SK-N-SH (cell line): ENCODE measurements at regions of chr5 and their contacts with region 1.

Region 1: DNA sequence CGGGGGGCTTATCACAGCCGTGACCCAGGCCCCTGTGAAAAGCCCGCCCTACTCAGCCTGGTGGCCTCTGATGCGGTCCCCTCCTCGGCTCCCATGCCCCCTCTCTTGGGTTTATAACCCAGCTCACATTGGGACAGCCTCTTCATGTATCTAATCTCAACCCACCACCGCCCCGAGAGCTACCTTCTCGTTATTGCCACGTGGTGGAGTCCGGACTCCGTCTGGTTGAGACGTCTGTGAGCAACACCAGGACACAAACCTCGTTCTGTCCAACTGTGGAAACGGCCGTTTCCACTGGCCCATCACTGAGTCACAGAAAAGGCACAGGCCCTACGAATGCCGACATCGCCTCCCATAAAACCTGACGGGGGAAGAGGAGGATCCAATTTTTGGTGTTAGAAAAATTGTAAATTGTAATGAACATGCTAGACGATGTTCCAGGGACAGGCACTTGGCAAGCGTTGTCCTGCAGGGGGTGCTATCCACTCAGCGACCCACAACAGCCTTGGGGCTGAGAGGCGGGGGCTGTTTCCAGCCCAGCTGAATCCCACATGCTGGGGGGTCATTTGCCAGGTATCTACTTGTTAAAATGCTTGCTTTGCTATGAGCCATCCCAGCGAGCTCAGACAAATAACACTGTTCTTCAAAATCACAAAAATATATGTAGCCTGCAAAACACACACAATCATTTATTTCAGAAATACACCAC is 37.3 kb upstream of the N4BP3 start:
- DNase-seq: peak; percentile 84
- H3K4me3 ChIP-seq: peak overlapping the region in 1 of 2 experiments; percentile 35; a peak in 1 of 4 replicates
- H3K27ac ChIP-seq: no peak overlapping the region
- H3K4me1 ChIP-seq: peaks cover 0 to 7% of the 10 kb centered on the region in 2 experiments; a peak in 1 of 4 replicates
- H3K27me3 ChIP-seq: peaks cover 7% of the 10 kb centered on the region; the same call in 1 of the 2 replicates
- CTCF ChIP-seq: peak; percentile 90
- EP300 ChIP-seq: no peak
- RAD21 ChIP-seq: peak; percentile 81

Region 2: GRCh38 chr5:178090858-178091540 is 15.0 kb after region 1 on chr5:
- CTCF ChIA-PET with region 1: interaction called, 35 read pairs
- POLR2A ChIA-PET with region 1: no interaction called
- DNase-seq: no peak
- H3K4me3 ChIP-seq: no peak overlapping the region
- H3K27ac ChIP-seq: no peak overlapping the region
- H3K4me1 ChIP-seq: no peaks in the 10 kb centered on the region
- H3K27me3 ChIP-seq: no peaks in the 10 kb centered on the region
- CTCF ChIP-seq: no peak
- EP300 ChIP-seq: no peak
- RAD21 ChIP-seq: no peak

Region 3: DNA sequence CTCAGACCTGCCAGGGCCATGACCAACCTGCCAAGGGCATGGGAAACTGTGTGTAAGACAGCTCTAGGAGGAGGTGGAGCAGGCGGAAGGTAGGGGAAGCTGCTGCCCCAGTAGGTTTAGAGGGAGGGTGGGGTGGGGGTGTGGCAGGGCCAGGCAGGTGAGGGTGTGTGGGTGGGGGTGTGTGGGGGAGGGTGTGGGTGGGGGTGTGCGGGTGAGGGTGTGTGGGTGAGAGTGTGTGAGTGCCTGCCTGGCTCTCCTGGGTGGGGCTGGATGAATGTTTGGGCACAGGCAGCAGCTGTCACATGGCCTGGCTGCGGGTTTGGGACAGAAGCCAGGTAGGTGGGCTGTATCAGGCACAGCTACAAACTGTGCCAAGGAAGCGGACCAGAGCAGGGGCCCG is 28.5 kb after region 1 on chr5:
- CTCF ChIA-PET with region 1: interaction called, 38 read pairs
- POLR2A ChIA-PET with region 1: no interaction called
- DNase-seq: no peak
- H3K4me3 ChIP-seq: no peak overlapping the region
- H3K27ac ChIP-seq: no peak overlapping the region
- H3K4me1 ChIP-seq: peaks cover 0 to 15% of the 10 kb centered on the region in 2 experiments; a peak in 1 of 4 replicates
- H3K27me3 ChIP-seq: no peaks in the 10 kb centered on the region
- CTCF ChIP-seq: no peak
- EP300 ChIP-seq: no peak
- RAD21 ChIP-seq: no peak

Region 4: GRCh38 chr5:178120868-178121357 is 44.9 kb after region 1 on chr5:
- CTCF ChIA-PET with region 1: interaction called, 116 read pairs
- POLR2A ChIA-PET with region 1: no interaction called
- DNase-seq: peak; percentile 95
- H3K4me3 ChIP-seq: peak overlapping the region in 1 of 2 experiments; percentile 12; a peak in 1 of 4 replicates
- H3K27ac ChIP-seq: peak overlapping the region in 1 of 2 experiments; percentile 58; a peak in 1 of 4 replicates
- H3K4me1 ChIP-seq: peaks cover 0 to 37% of the 10 kb centered on the region in 2 experiments; a peak in 1 of 4 replicates
- H3K27me3 ChIP-seq: no peaks in the 10 kb centered on the region
- CTCF ChIP-seq: peak; percentile 56
- EP300 ChIP-seq: no peak
- RAD21 ChIP-seq: peak; percentile 36

Region 5: GRCh38 chr5:178153573-178154343 is 77.8 kb after region 1 on chr5 and contains the start of gene NHP2:
- CTCF ChIA-PET with region 1: interaction called, 319 read pairs
- POLR2A ChIA-PET with region 1: interaction called, 5 read pairs
- DNase-seq: peak; percentile 99
- H3K4me3 ChIP-seq: peak within 1 kb of the TSS; percentile 81 to 90
- H3K27ac ChIP-seq: peak within 1 kb of the TSS; percentile 36 to 64; a peak in 3 of 4 replicates
- H3K4me1 ChIP-seq: peaks cover 0 to 22% of the 10 kb centered on the region in 2 experiments; a peak in 3 of 4 replicates
- H3K27me3 ChIP-seq: no peaks in the 10 kb centered on the region
- CTCF ChIP-seq: no peak
- EP300 ChIP-seq: no peak
- RAD21 ChIP-seq: no peak
- polyA plus RNA-seq, gene NHP2: 313 and 455 TPM in 2 replicates

Region 6: GRCh38 chr5:178186427-178186826 is 110.4 kb after region 1 on chr5:
- CTCF ChIA-PET with region 1: interaction called, 18 read pairs
- POLR2A ChIA-PET with region 1: no interaction called
- DNase-seq: peak; percentile 45
- H3K4me3 ChIP-seq: no peak overlapping the region
- H3K27ac ChIP-seq: no peak overlapping the region
- H3K4me1 ChIP-seq: no peaks in the 10 kb centered on the region; a peak in 1 of 4 replicates
- H3K27me3 ChIP-seq: no peaks in the 10 kb centered on the region
- CTCF ChIP-seq: no peak
- EP300 ChIP-seq: no peak
- RAD21 ChIP-seq: no peak

Region 7: DNA sequence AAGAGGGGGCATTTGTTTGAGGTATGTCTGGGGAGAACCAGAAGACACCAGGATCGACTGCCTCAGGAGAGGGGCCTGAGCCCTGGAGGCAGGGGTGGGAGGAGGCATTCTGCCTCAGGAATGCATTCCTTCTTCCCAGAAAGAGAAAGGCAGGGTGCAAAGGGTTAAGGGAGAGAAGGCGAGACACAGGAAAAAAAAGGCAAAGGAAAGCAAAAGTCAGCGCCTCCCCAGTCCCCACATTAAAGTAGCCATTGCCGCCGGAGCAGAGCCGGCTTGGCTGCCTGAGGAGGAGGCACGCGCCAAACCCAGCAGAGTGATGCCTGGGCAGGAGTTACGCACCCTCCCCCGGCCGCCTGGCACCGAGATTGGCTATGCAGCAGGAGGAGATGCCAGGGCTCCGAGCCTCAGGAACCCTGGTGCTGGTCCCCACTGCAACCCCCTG is 280.5 kb after region 1 on chr5:
- CTCF ChIA-PET with region 1: no interaction called
- POLR2A ChIA-PET with region 1: no interaction called
- DNase-seq: peak; percentile 58
- H3K4me3 ChIP-seq: no peak overlapping the region
- H3K27ac ChIP-seq: peak overlapping the region in 1 of 2 experiments; percentile 24; a peak in 1 of 4 replicates
- H3K4me1 ChIP-seq: peaks cover 0 to 30% of the 10 kb centered on the region in 2 experiments; a peak in 1 of 4 replicates
- H3K27me3 ChIP-seq: no peaks in the 10 kb centered on the region
- CTCF ChIP-seq: no peak
- EP300 ChIP-seq: no peak
- RAD21 ChIP-seq: no peak